H1 (cell line): ENCODE measurements at regions of chr18 and their contacts with region 1.

Region 1: DNA sequence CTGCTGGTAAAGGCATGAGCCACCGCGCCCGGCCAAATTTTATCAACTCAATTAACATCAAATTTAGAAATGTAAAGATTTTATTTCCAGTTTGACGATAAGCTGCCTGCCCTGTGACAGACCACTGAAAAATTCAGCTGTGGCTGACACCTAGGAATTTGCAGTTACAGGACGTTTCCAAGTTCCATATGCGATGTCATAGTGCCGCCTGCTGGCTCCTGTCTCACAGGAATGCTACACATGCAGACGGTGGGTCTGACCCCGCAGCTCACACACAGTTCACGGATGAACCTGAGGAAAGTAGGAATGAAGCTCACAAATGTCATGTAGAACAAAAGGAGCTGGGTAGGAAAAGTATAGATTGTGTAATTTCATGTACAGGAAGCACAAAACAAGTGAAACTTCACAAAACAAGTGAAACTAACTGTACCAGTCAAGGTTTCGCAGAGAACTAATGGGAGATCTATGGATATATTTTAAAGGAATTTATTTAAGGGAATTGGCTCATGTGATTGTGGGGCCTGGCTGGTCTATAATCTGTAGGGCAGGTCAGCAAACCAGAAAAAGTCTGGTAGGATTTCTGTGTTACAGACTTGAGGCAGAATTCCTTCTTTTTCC is 13.2 kb upstream of the SEH1L start:
- DNase-seq: peak in 1 of 2 experiments; percentile 82
- H3K4me3 ChIP-seq: no peak overlapping the region
- H3K27ac ChIP-seq: no peak overlapping the region
- H3K4me1 ChIP-seq: peaks cover 0 to 5% (median 3%) of the 10 kb centered on the region in 4 experiments; a peak in 1 of 7 replicates
- H3K27me3 ChIP-seq: no peaks in the 10 kb centered on the region
- CTCF ChIP-seq: peak; percentile 92 to 98 (median 93)
- EP300 ChIP-seq: no peak
- POLR2A ChIP-seq: no peak
- RAD21 ChIP-seq: peak; percentile 99

Region 2: DNA sequence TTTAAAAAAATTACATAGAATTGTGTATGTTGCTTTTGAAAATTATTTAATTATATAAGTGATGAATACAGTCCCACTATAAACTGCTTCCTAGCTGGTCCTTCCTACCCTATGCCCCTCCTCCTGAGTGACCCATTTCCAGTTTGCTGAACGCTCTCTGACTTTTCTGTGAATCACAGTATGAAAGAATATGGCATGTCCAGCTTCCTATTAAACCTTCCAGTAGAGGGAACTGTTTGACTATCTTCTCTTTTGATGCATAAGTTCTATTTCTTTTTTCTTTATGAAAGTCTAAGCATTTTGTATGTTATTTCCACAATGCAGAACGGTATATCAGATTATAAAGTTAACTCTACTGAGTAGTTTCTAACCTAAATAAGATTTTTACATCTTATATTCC is 190.5 kb before region 1 on chr18:
- CTCF ChIA-PET with region 1: interaction called, 14 read pairs
- POLR2A ChIA-PET with region 1: no interaction called
- DNase-seq: no peak
- H3K4me3 ChIP-seq: no peak overlapping the region
- H3K27ac ChIP-seq: no peak overlapping the region
- H3K4me1 ChIP-seq: no peaks in the 10 kb centered on the region; a peak in 1 of 7 replicates
- H3K27me3 ChIP-seq: no peaks in the 10 kb centered on the region
- CTCF ChIP-seq: peak in 1 of 3 experiments; percentile 20; a peak in 2 of 4 replicates
- EP300 ChIP-seq: no peak
- POLR2A ChIP-seq: no peak
- RAD21 ChIP-seq: peak; percentile 43 to 49

Region 3: GRCh38 chr18:12862467-12862866 is 72.1 kb before region 1 on chr18:
- CTCF ChIA-PET with region 1: no interaction called
- POLR2A ChIA-PET with region 1: no interaction called
- DNase-seq: peak; percentile 66 to 82
- H3K4me3 ChIP-seq: no peak overlapping the region; a peak in 1 of 8 replicates
- H3K27ac ChIP-seq: no peak overlapping the region
- H3K4me1 ChIP-seq: peaks cover 0 to 12% (median 5%) of the 10 kb centered on the region in 4 experiments; a peak in 5 of 7 replicates
- H3K27me3 ChIP-seq: no peaks in the 10 kb centered on the region
- CTCF ChIP-seq: no peak
- EP300 ChIP-seq: no peak
- POLR2A ChIP-seq: no peak
- RAD21 ChIP-seq: no peak; a peak in 1 of 4 replicates

Region 4: DNA sequence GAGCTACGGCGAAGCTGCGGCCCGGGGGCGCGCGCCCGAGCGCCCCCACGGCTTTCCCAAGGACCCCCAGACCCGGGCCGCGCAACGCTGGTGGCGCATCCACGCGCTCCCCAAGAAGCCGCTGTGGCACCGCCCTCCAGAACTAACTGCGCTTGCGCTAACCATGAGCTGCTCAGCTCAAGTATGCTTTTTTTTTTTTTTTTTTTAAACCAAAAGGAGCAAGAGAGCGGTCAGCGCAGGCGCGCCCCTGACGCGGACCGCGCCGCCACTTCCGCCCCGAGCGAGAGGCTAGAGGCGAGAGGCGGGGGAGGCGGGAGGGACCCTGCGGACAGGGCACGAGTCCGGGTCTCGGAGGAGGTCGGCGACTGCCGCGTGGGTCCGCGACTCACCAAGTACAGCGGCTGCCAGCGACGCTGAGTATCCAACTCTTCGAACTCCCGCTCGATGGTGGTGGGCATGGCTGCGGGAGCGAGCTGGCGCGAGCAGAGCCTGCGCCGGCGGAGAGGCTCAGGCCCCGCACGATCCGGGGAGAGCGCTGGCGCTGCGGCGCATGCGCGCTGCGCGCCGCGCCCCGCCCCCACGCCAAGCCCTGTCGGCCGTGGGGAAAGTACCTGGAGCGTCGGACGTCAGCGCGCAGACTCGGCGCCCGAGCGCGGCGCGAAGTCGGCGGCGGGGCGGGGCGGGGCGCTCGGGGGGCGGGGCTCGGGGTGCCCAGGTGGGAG is 50.7 kb before region 1 on chr18 and contains the start of gene PTPN2:
- CTCF ChIA-PET with region 1: interaction called, 34 read pairs
- POLR2A ChIA-PET with region 1: interaction called, 3 read pairs
- DNase-seq: peak; percentile 80 to 87
- H3K4me3 ChIP-seq: peak within 1 kb of the TSS; percentile 76 to 89 (median 80)
- H3K27ac ChIP-seq: peak within 1 kb of the TSS; percentile 93
- H3K4me1 ChIP-seq: peaks cover 7 to 24% (median 12%) of the 10 kb centered on the region in 4 experiments; a peak in 5 of 7 replicates
- H3K27me3 ChIP-seq: no peaks in the 10 kb centered on the region
- CTCF ChIP-seq: no peak
- EP300 ChIP-seq: no peak
- POLR2A ChIP-seq: peak; percentile 90 to 98
- RAD21 ChIP-seq: no peak
- total RNA-seq, gene PTPN2: 54.0 and 54.5 TPM in 2 replicates

Region 5: DNA sequence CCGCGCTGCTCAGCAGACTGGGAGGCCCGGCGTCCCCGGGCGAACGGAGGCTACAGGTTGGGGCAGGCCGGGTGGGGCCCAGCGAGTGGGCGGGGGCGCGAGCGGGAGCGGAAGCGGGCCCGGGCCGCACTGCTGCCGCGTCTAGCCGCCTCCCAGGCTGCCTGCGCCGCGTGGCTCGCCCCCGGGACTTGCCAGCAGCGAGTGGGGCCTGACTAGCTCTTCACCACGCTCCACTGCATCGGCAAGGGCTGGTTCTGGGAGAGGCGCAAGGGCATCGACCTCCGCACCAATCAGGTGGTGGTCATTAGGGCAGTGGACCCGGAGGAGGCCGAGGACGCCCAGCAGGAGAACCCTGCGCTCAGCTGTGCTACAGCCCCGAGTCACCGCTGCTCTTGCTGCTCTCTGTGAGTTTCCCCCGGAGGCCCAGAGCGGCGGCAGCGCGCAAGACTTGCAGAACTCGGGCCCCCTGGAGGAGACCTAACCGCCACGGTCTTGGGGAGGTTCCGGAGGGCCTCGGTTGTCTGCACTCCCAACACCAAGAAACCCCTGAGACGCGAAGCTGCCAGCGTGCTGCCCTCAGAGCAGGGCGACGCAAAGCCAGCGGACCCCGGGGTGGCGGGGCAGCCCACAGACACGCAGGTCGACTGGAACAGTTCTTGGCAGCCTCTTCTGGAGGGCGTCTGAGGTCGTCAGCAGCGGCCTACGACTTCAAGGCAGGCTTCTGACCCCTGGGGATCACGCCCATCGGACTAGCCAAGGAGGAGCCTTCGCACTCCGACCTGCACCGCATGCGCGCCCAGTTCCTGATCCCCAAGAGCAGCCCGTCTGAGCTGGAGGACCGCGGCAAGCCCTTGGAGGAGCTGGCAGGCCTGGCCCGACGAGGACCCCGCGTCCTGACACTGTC is 23.3 kb before region 1 on chr18:
- CTCF ChIA-PET with region 1: interaction called, 16 read pairs
- POLR2A ChIA-PET with region 1: interaction called, 4 read pairs
- DNase-seq: peak in 1 of 2 experiments; percentile 52
- H3K4me3 ChIP-seq: peak overlapping the region in 1 of 4 experiments; percentile 25; a peak in 1 of 8 replicates
- H3K27ac ChIP-seq: no peak overlapping the region
- H3K4me1 ChIP-seq: no peaks in the 10 kb centered on the region; a peak in 1 of 7 replicates
- H3K27me3 ChIP-seq: peaks cover 0 to 18% (median 6%) of the 10 kb centered on the region in 4 experiments; a peak in 4 of 7 replicates
- CTCF ChIP-seq: no peak
- EP300 ChIP-seq: no peak
- POLR2A ChIP-seq: no peak
- RAD21 ChIP-seq: no peak

Region 6: DNA sequence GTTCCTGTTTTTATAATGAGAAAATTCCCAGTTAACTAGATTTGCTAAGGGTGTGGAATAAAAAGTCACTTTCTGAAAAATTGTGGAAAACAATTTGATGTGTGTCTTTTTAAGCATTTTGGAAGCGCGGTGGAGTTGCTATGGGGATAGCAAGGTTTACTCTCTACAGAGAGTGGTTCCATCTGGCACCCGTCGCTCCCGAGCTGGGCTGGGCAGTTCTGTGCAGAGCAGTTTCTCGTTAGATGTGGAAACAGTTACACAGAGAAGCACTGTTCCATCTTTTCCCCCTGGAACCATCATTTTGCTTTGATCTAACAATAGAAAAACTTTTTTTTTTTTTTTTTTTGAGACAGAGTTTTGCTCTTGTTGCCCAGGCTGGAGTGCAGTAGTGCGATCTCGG is 301.4 kb after region 1 on chr18:
- CTCF ChIA-PET with region 1: no interaction called
- POLR2A ChIA-PET with region 1: no interaction called
- DNase-seq: no peak
- H3K4me3 ChIP-seq: no peak overlapping the region
- H3K27ac ChIP-seq: no peak overlapping the region
- H3K4me1 ChIP-seq: peaks cover 0 to 8% (median 0%) of the 10 kb centered on the region in 4 experiments; a peak in 2 of 7 replicates
- H3K27me3 ChIP-seq: no peaks in the 10 kb centered on the region
- CTCF ChIP-seq: no peak
- EP300 ChIP-seq: no peak
- POLR2A ChIP-seq: no peak
- RAD21 ChIP-seq: no peak